Stomach (tissue), 19 donors: ENCODE measurements at regions of chr7 and their contacts with region 1.

Region 1: DNA sequence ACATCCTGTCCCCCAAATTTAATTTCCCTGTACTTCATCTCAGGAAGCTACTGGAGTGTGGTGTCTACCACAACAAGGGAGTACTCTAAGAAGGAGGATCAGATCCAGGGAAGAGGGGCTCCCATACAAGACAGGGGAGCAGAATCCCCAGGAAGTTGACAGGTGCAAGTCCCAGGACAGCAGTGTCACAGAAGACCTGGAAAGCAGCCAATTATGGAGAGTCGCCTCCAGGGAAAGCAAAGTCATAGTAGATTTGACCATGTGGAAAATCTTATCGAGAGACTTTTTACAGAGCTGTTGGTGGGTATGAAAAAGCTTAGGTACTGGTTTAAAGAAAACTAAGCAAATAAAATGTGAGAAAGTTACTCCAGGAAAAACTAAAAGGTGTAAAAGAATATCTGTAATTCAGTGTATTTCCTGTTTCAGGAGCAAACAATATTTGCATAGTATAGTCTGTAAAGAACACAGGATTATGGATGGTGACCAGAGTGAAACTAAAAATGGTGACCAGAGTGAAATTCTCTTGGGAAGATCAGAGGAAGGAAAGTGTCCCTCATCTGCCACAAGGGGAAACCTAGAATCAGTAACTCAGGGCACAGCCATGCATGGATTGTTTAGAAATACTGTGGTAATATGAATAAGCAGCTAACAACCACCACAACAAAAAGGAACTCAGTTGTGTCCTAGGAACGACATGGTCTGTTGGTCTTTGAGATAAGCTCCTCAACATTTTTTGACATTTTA is 44.5 kb downstream of the LANCL2 start:
- DNase-seq: no peak
- H3K4me3 ChIP-seq: no peak overlapping the region
- H3K27ac ChIP-seq: no peak overlapping the region
- H3K4me1 ChIP-seq: no peaks in the 10 kb centered on the region
- H3K27me3 ChIP-seq: no peaks in the 10 kb centered on the region
- CTCF ChIP-seq: no peak
- EP300 ChIP-seq: no peak
- POLR2A ChIP-seq: no peak

Region 2: GRCh38 chr7:55019691-55020465 is 389.8 kb before region 1 on chr7:
- intact Hi-C with region 1: no loop called
- DNase-seq: peak; percentile 51 to 72
- H3K4me3 ChIP-seq: peak overlapping the region; percentile 70 to 83 (median 82)
- H3K27ac ChIP-seq: peak overlapping the region; percentile 93 to 97 (median 95)
- H3K4me1 ChIP-seq: peaks cover 9 to 57% (median 34%) of the 10 kb centered on the region in 4 donors
- H3K27me3 ChIP-seq: peaks cover 0 to 28% (median 11%) of the 10 kb centered on the region in 3 donors
- CTCF ChIP-seq: no peak
- EP300 ChIP-seq: no peak
- POLR2A ChIP-seq: no peak

Region 3: DNA sequence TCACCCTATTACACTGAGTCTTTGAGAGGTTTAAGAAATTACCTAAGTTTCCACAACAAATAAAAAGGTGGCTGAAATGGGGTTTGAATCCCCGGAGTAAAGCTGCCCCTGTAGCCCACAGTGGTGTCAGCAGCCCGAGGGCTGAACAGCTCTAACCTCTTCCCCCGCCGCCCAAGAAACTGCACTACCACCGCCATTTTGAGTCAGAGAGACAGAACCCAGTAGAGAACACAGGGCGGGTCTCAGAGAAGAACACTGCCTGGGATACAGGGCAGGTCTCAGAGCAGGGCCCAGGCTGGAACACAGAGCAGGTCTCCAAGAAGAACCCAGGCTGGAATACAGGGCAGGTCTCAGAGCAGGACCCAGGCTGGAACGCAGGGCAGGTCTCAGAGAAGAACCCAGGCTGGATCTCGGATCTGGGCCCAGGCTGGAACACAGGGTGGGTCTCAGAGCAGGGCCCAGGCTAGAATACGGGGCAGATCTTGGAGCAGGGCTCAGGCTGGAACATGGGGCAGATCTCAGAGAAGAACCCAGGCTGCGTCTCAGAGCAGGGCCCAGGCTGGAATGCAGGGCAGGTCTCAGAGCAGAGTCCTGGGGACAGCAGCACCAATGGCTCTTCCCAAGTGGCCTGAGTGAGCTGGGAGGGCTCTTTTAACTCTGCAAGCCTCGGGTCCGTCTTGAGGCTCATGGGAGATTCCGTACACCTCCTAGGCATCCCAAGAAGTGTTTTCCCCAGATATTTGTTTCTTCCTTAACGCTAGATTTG is 130.4 kb before region 1 on chr7:
- intact Hi-C with region 1: loop called (anchors 5 kb)
- DNase-seq: no peak
- H3K4me3 ChIP-seq: no peak overlapping the region
- H3K27ac ChIP-seq: no peak overlapping the region
- H3K4me1 ChIP-seq: no peaks in the 10 kb centered on the region
- H3K27me3 ChIP-seq: no peaks in the 10 kb centered on the region
- CTCF ChIP-seq: no peak
- EP300 ChIP-seq: no peak
- POLR2A ChIP-seq: no peak